GM12878 (cell line): ENCODE measurements at regions of chr4 and their contacts with region 1.

Region 1: DNA sequence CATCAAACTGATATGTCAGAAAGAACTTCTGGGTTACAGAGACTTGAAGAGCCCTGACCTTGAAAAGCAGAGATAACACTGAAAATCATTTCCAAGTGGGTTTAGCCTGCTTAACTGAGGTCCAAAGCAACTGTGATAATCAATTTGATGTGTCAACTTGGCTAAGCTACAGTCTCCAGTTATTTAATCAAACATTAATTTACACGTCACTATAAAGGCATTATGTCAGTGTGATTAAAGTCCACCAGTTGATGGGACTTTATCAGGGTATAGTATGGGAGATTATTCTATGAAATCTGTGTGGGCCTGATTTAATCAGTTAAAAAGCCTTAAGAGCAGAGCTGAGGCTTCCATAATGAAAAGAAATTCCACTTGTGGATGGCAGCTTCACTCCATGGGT is 69.1 kb upstream of the PRSS48 start:
- DNase-seq: no peak
- ATAC-seq: no peak
- H3K4me3 ChIP-seq: no peak overlapping the region
- H3K27ac ChIP-seq: no peak overlapping the region
- H3K4me1 ChIP-seq: no peaks in the 10 kb centered on the region
- H3K27me3 ChIP-seq: no peaks in the 10 kb centered on the region
- CTCF ChIP-seq: no peak
- EP300 ChIP-seq: no peak
- POLR2A ChIP-seq: no peak
- RAD21 ChIP-seq: no peak

Region 2: GRCh38 chr4:151087467-151087866 is 120.4 kb before region 1 on chr4:
- CTCF ChIA-PET with region 1: no interaction called
- POLR2A ChIA-PET with region 1: interaction called, 10 read pairs
- RAD21 ChIA-PET with region 1: no interaction called
- SMC1A ChIA-PET with region 1: no interaction called
- in situ Hi-C with region 1: no loop called
- intact Hi-C with region 1: no loop called
- DNase-seq: no peak
- ATAC-seq: no peak
- H3K4me3 ChIP-seq: no peak overlapping the region
- H3K27ac ChIP-seq: no peak overlapping the region
- H3K4me1 ChIP-seq: no peaks in the 10 kb centered on the region
- H3K27me3 ChIP-seq: no peaks in the 10 kb centered on the region
- CTCF ChIP-seq: no peak
- EP300 ChIP-seq: no peak
- POLR2A ChIP-seq: no peak
- RAD21 ChIP-seq: no peak

Region 3: DNA sequence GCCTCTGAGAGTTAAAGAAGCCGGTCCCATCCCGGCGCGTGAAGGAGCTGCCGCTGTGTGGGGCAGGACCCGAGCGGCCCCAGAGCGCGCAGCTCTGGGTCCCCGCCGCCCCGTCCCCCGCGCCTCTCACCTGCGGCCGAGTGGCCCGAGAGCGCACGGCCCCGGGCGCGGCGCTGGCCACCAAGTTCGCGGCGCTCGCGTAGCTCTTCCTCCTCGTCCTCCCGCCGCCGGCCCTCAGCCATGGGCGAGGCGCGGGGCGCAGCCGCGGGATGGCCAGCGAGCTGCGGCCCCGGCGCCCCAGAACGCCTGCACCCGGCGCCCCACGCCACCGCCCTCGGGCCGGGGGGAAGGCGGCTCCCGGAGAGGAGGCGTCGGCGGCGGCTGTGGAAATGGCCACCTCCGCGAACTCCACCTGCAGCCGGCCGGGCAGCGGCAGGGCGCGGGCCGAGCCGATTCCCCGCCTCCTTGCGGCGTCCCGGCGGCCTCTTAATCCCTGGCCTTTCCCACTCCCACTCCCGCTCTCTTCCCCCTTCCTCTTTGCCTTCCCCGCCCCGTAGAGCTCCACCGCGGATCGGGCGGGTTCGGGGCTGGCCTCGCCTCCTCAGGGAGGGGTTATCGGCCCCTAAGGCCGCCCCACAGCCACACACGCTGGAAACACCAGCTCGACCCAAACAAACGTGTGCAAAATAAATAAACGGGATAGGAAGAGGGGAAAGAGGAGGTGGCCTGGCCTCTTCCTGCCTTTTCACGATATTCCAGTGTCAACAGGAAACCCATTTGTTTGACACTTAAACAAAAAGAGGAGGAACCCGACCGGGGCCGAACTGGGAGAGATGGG is 117.5 kb after region 1 on chr4 and contains the start of gene SH3D19:
- CTCF ChIA-PET with region 1: no interaction called
- POLR2A ChIA-PET with region 1: no interaction called
- RAD21 ChIA-PET with region 1: no interaction called
- SMC1A ChIA-PET with region 1: no interaction called
- in situ Hi-C with region 1: no loop called
- intact Hi-C with region 1: no loop called
- DNase-seq: no peak
- ATAC-seq: no peak; the same call in 1 of the 3 replicates
- H3K4me3 ChIP-seq: no peak within 1 kb of the TSS
- H3K27ac ChIP-seq: no peak within 1 kb of the TSS
- H3K4me1 ChIP-seq: no peaks in the 10 kb centered on the region
- H3K27me3 ChIP-seq: peaks cover 10 to 13% of the 10 kb centered on the region in 2 experiments
- CTCF ChIP-seq: no peak
- EP300 ChIP-seq: no peak
- POLR2A ChIP-seq: no peak
- RAD21 ChIP-seq: no peak
- polyA plus RNA-seq, gene SH3D19: 2.4 to 6.9 TPM